Caco-2 (cell line): ENCODE measurements at regions of chr5 and their contacts with region 1.

Region 1: GRCh38 chr5:130316971-130317680 is 412.9 kb downstream of the CHSY3 start:
- DNase-seq: peak; percentile 82 to 90
- H3K4me3 ChIP-seq: no peak overlapping the region
- H3K4me3 Mint-ChIP-seq: peak overlapping the region; percentile 10
- H3K27ac Mint-ChIP-seq: peak overlapping the region; percentile 61
- H3K4me1 ChIP-seq: peaks cover 20% of the 10 kb centered on the region
- H3K4me1 Mint-ChIP-seq: peaks cover 8% of the 10 kb centered on the region
- H3K27me3 ChIP-seq: no peaks in the 10 kb centered on the region
- H3K27me3 Mint-ChIP-seq: no peaks in the 10 kb centered on the region
- CTCF ChIP-seq: no peak

Region 2: GRCh38 chr5:130295235-130295634 is 21.9 kb before region 1 on chr5:
- CTCF ChIA-PET with region 1: no interaction called
- POLR2A ChIA-PET with region 1: no interaction called
- intact Hi-C with region 1: loop called (anchors 1 kb)
- DNase-seq: no peak
- H3K4me3 ChIP-seq: no peak overlapping the region
- H3K4me3 Mint-ChIP-seq: no peak overlapping the region
- H3K27ac Mint-ChIP-seq: peak overlapping the region; percentile 45
- H3K4me1 ChIP-seq: peaks cover 11% of the 10 kb centered on the region
- H3K4me1 Mint-ChIP-seq: peaks cover 32% of the 10 kb centered on the region
- H3K27me3 ChIP-seq: no peaks in the 10 kb centered on the region
- H3K27me3 Mint-ChIP-seq: no peaks in the 10 kb centered on the region
- CTCF ChIP-seq: no peak

Region 3: GRCh38 chr5:130337179-130337888 is 20.2 kb after region 1 on chr5:
- CTCF ChIA-PET with region 1: no interaction called
- POLR2A ChIA-PET with region 1: no interaction called
- intact Hi-C with region 1: loop called (anchors 1 kb)
- DNase-seq: peak in 1 of 2 experiments; percentile 36
- H3K4me3 ChIP-seq: no peak overlapping the region
- H3K4me3 Mint-ChIP-seq: peak overlapping the region; percentile 46
- H3K27ac Mint-ChIP-seq: peak overlapping the region; percentile 79
- H3K4me1 ChIP-seq: peaks cover 16% of the 10 kb centered on the region
- H3K4me1 Mint-ChIP-seq: peaks cover 12% of the 10 kb centered on the region
- H3K27me3 ChIP-seq: no peaks in the 10 kb centered on the region
- H3K27me3 Mint-ChIP-seq: no peaks in the 10 kb centered on the region
- CTCF ChIP-seq: no peak

Region 4: DNA sequence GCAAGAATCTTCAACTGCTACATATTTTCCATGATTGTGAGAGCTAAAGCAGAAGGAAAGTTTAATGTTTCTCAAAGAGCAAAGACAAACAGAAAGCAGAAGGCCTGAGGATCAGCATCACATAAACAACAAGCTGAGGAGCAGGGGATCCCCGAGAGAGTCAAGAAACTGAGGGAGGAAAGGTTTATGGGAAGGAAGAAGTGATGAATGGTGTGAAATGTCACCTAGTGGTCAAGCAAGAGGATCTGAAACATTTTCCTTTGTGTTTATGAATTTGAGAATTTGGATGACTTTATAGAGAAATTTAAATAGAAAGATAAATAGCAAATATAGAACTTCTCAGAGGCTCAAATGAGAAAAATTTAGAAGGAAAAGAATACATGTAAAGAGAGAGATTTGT is 69.0 kb after region 1 on chr5:
- CTCF ChIA-PET with region 1: no interaction called
- POLR2A ChIA-PET with region 1: no interaction called
- intact Hi-C with region 1: loop called (anchors 1 kb)
- DNase-seq: no peak
- H3K4me3 ChIP-seq: no peak overlapping the region
- H3K4me3 Mint-ChIP-seq: no peak overlapping the region
- H3K27ac Mint-ChIP-seq: no peak overlapping the region
- H3K4me1 ChIP-seq: no peaks in the 10 kb centered on the region; the same call in 1 of the 2 replicates
- H3K4me1 Mint-ChIP-seq: no peaks in the 10 kb centered on the region
- H3K27me3 ChIP-seq: no peaks in the 10 kb centered on the region
- H3K27me3 Mint-ChIP-seq: no peaks in the 10 kb centered on the region
- CTCF ChIP-seq: no peak

Region 5: DNA sequence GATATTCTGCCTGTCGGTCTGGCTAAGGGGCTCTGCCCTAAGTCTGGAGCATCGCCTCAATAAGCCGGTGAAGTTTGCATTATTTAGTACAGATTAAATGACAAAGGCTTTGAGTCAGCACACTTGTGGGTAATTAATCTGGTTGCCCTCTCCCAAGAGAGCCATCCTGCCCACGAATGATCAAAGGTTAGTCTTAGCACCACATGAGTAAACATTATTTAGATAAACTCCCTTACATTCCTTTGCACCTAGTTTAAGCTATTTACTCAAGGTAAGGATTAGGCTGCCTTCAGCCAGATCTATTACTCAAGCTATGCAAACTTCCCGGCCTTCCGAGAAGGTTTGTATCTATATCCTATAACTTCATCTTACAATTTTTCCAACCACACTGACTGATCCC is 159.2 kb after region 1 on chr5:
- CTCF ChIA-PET with region 1: no interaction called
- POLR2A ChIA-PET with region 1: no interaction called
- intact Hi-C with region 1: loop called (anchors 1 kb)
- DNase-seq: peak; percentile 28 to 62
- H3K4me3 ChIP-seq: no peak overlapping the region
- H3K4me3 Mint-ChIP-seq: no peak overlapping the region
- H3K27ac Mint-ChIP-seq: peak overlapping the region; percentile 76
- H3K4me1 ChIP-seq: peaks cover 12% of the 10 kb centered on the region
- H3K4me1 Mint-ChIP-seq: peaks cover 11% of the 10 kb centered on the region
- H3K27me3 ChIP-seq: no peaks in the 10 kb centered on the region
- H3K27me3 Mint-ChIP-seq: no peaks in the 10 kb centered on the region
- CTCF ChIP-seq: no peak

Region 6: GRCh38 chr5:130616161-130616560 is 299.0 kb after region 1 on chr5:
- CTCF ChIA-PET with region 1: no interaction called
- POLR2A ChIA-PET with region 1: no interaction called
- intact Hi-C with region 1: no loop called
- DNase-seq: no peak
- H3K4me3 ChIP-seq: no peak overlapping the region
- H3K4me3 Mint-ChIP-seq: no peak overlapping the region
- H3K27ac Mint-ChIP-seq: no peak overlapping the region
- H3K4me1 ChIP-seq: no peaks in the 10 kb centered on the region
- H3K4me1 Mint-ChIP-seq: no peaks in the 10 kb centered on the region
- H3K27me3 ChIP-seq: no peaks in the 10 kb centered on the region
- H3K27me3 Mint-ChIP-seq: no peaks in the 10 kb centered on the region
- CTCF ChIP-seq: no peak

Region 7: DNA sequence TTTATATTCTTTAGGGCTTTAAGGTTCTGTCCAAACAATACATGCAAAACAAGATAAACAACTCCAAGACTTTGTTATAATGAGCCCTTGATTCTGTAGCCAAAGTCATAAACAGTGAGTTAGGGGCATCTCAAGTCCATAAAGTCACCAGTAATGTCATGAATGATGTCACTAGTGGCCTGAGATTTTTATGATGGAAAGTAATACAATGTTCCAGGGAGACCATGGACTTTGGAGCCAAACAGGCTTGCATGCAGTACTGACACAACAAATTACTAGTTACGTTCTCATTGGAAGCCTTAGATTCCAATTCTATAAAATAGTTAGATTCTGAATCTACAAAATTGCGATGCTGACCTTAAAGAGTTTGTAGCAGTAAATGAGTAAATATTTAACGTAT is 567.9 kb after region 1 on chr5:
- CTCF ChIA-PET with region 1: no interaction called
- POLR2A ChIA-PET with region 1: no interaction called
- intact Hi-C with region 1: loop called (anchors 5 kb)
- DNase-seq: peak; percentile 47 to 59
- H3K4me3 ChIP-seq: no peak overlapping the region
- H3K4me3 Mint-ChIP-seq: no peak overlapping the region
- H3K27ac Mint-ChIP-seq: peak overlapping the region; percentile 83
- H3K4me1 ChIP-seq: peaks cover 29% of the 10 kb centered on the region
- H3K4me1 Mint-ChIP-seq: peaks cover 23% of the 10 kb centered on the region
- H3K27me3 ChIP-seq: no peaks in the 10 kb centered on the region
- H3K27me3 Mint-ChIP-seq: no peaks in the 10 kb centered on the region
- CTCF ChIP-seq: no peak

Region 8: GRCh38 chr5:130955041-130955440 is 637.9 kb after region 1 on chr5:
- CTCF ChIA-PET with region 1: no interaction called
- POLR2A ChIA-PET with region 1: no interaction called
- intact Hi-C with region 1: loop called (anchors 1 kb)
- DNase-seq: no peak
- H3K4me3 ChIP-seq: no peak overlapping the region
- H3K4me3 Mint-ChIP-seq: peak overlapping the region; percentile 10
- H3K27ac Mint-ChIP-seq: peak overlapping the region; percentile 51
- H3K4me1 ChIP-seq: peaks cover 21% of the 10 kb centered on the region
- H3K4me1 Mint-ChIP-seq: peaks cover 15% of the 10 kb centered on the region
- H3K27me3 ChIP-seq: no peaks in the 10 kb centered on the region
- H3K27me3 Mint-ChIP-seq: no peaks in the 10 kb centered on the region
- CTCF ChIP-seq: no peak